H1 (cell line): ENCODE measurements at regions of chr4 and their contacts with region 1.

Region 1: DNA sequence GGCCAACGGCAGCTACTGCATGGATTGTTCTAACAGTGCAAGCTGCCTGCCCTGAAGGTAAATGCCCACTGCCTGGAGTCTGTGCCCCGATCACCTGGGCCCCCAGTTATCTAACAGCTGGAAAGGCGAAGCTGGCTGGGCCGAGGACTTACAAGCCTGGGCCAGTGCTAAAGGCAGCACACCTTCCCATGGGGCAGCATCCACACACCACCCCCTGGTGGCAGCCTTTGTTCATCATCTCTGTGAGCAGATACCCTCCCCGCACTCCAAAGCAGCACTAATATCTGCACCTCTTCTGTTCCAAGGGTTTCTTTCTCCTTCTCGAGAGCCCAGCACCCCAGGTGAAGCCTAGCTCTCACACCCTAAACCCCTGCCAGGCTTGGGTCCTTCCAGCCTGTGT is 7.6 kb downstream of the SLC2A9 start:
- DNase-seq: peak; percentile 47 to 85
- H3K4me3 ChIP-seq: no peak overlapping the region
- H3K27ac ChIP-seq: no peak overlapping the region
- H3K4me1 ChIP-seq: peaks cover 0 to 4% (median 0%) of the 10 kb centered on the region in 4 experiments; a peak in 1 of 7 replicates
- H3K27me3 ChIP-seq: no peaks in the 10 kb centered on the region; a peak in 1 of 7 replicates
- CTCF ChIP-seq: peak in 2 of 3 experiments; percentile 78 to 82; a peak in 3 of 4 replicates
- EP300 ChIP-seq: no peak
- POLR2A ChIP-seq: no peak
- RAD21 ChIP-seq: peak; percentile 78 to 82

Region 2: DNA sequence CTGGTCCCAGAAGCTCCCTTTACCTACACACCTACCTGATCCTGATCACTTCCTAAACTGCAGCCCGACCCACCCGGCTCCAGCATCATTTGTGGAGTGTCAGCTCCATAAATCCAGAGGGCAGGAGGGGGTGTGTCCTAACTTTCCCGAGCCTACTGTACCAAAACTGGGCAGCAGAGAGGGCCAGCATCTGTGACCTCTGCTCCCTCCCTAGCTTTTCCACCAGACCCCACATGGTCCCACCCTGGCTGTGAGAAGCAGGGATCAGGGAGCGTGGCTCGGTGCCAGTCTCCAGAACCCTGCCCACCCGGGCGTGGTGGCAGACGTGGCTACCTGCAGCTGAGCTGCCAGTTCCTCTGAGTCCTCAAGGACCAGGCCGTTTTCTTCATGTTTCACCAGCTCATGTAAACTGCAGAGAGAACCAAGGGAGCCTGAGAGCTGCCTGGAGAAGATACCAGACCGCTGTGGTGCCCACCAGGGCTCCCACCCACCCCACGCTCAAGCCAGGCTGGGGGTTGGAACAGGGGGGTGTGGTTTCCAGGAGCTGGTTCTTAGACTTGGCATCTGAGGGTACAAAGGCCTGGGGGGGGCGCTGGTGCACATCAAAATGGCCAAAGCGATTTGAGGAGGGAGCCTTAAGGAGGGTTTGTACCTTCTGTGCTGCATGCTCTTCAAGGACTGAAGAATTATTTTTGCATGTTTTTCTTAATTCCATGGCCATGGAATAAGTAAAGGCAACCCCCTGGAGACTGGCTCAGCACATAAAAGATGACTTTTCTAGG is 309.0 kb before region 1 on chr4:
- CTCF ChIA-PET with region 1: interaction called, 86 read pairs
- POLR2A ChIA-PET with region 1: no interaction called
- DNase-seq: no peak
- H3K4me3 ChIP-seq: no peak overlapping the region
- H3K27ac ChIP-seq: no peak overlapping the region
- H3K4me1 ChIP-seq: no peaks in the 10 kb centered on the region
- H3K27me3 ChIP-seq: no peaks in the 10 kb centered on the region
- CTCF ChIP-seq: peak in 1 of 3 experiments; percentile 1; a peak in 1 of 4 replicates
- EP300 ChIP-seq: no peak
- POLR2A ChIP-seq: no peak
- RAD21 ChIP-seq: peak in 1 of 2 experiments; percentile 20; a peak in 1 of 4 replicates

Region 3: GRCh38 chr4:9781343-9782135 is 232.2 kb before region 1 on chr4 and contains the start of gene DRD5:
- CTCF ChIA-PET with region 1: interaction called, 20 read pairs
- POLR2A ChIA-PET with region 1: no interaction called
- DNase-seq: peak; percentile 17 to 71
- H3K4me3 ChIP-seq: peak within 1 kb of the TSS; percentile 29 to 66 (median 34)
- H3K27ac ChIP-seq: no peak within 1 kb of the TSS
- H3K4me1 ChIP-seq: no peaks in the 10 kb centered on the region; a peak in 1 of 7 replicates
- H3K27me3 ChIP-seq: peaks cover 13 to 36% (median 31%) of the 10 kb centered on the region in 4 experiments
- CTCF ChIP-seq: no peak
- EP300 ChIP-seq: no peak
- POLR2A ChIP-seq: no peak
- RAD21 ChIP-seq: no peak
- total RNA-seq, gene DRD5: 0.11 TPM in 1 of 2 replicates, not detected in the other

Region 4: DNA sequence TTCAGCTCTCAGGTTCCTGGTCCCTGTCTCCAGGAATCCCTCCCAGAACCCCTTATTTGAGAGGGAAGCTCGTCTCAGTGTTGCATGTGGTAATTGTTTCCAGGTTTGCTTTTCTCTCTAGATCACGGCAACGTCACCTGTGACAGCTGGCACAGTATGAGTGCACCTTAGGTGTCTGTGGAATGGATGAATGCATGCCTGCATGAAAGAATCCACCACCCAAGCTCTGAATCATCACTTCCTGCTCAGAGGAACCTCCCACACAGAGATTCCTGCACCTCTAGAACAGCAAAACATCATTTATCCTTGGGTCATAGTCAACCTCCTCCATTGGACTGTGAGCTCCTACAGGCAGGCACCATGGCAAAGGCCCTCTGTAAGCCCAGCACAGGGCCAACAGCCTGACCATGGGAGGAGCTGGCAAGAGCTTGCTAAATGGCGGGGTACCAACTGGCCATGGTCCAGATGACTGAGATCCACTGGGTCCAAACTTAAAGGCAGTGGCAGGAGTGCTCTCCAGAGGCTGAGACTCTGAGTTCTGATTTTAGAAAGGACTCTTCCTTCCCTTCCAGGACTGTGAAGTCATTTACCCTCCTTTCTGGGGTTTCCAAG is 108.6 kb before region 1 on chr4:
- CTCF ChIA-PET with region 1: interaction called, 57 read pairs
- POLR2A ChIA-PET with region 1: no interaction called
- DNase-seq: no peak
- H3K4me3 ChIP-seq: no peak overlapping the region
- H3K27ac ChIP-seq: no peak overlapping the region
- H3K4me1 ChIP-seq: no peaks in the 10 kb centered on the region
- H3K27me3 ChIP-seq: no peaks in the 10 kb centered on the region
- CTCF ChIP-seq: no peak
- EP300 ChIP-seq: no peak
- POLR2A ChIP-seq: no peak
- RAD21 ChIP-seq: no peak

Region 5: GRCh38 chr4:9944431-9945425 is 69.0 kb before region 1 on chr4:
- CTCF ChIA-PET with region 1: interaction called, 21 read pairs
- POLR2A ChIA-PET with region 1: no interaction called
- DNase-seq: peak in 1 of 2 experiments; percentile 22
- H3K4me3 ChIP-seq: no peak overlapping the region
- H3K27ac ChIP-seq: no peak overlapping the region
- H3K4me1 ChIP-seq: peaks cover 0 to 5% (median 0%) of the 10 kb centered on the region in 4 experiments; a peak in 2 of 7 replicates
- H3K27me3 ChIP-seq: no peaks in the 10 kb centered on the region
- CTCF ChIP-seq: no peak
- EP300 ChIP-seq: no peak
- POLR2A ChIP-seq: no peak
- RAD21 ChIP-seq: no peak

Region 6: DNA sequence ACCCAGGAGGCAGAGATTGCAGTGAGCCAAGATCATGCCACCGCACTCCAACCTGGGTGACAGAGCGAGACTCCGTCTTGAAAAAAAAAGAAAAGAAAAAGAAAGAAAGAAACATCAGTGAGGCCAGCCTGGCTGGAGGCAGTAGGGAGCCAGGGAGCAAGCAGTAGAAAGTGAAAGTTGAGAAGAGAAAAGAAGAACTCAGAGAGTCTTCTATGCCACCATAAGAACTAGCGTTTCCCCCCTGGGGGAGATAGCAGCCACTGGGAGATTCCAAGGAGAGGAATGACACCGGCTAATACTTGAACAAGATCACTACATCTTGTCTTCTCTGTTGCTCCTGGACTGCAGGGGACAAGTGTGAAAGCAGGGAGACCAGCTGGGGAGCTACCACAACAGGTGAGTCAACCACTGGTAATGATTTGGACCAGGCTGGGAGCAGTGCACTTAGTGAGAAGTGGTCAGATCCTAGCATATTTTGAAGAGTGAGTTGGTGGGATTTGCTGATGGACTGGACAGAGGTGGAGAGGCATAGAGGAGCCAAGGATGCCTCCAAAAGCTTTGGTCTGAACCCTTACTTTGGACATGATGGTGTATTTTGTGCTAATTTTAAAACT is 25.9 kb before region 1 on chr4:
- CTCF ChIA-PET with region 1: interaction called, 13 read pairs
- POLR2A ChIA-PET with region 1: no interaction called
- DNase-seq: no peak
- H3K4me3 ChIP-seq: no peak overlapping the region
- H3K27ac ChIP-seq: no peak overlapping the region
- H3K4me1 ChIP-seq: no peaks in the 10 kb centered on the region
- H3K27me3 ChIP-seq: no peaks in the 10 kb centered on the region
- CTCF ChIP-seq: no peak
- EP300 ChIP-seq: no peak
- POLR2A ChIP-seq: no peak
- RAD21 ChIP-seq: no peak